Heart left ventricle (tissue), 16 donors: ENCODE measurements at regions of chr17 and their contacts with region 1.

Region 1: DNA sequence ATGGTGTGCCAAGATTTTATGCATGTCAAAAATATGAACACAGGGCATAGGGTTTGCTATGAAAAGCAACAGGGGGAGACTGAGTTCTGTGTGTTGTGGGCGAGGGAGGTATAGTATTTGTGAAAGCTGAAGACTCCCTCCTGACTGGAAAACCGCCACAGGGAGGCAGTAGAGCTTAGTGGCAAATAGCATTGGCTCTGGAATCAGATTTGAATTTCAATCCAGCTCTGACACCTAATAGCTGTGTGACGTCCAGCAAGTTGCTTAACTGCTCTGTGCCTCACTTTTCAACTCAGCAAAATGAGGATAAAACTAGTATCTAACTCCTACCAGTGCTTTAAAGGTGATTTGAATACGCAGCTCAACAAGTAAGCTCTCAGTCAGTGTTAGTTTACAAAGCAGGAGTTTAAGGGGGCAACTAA is 22.0 kb downstream of the KPNA2 start:
- DNase-seq: no peak
- ATAC-seq: no peak
- H3K4me3 ChIP-seq: no peak overlapping the region
- H3K27ac ChIP-seq: no peak overlapping the region
- H3K4me1 ChIP-seq: peaks cover 0 to 33% (median 15%) of the 10 kb centered on the region in 12 donors
- H3K27me3 ChIP-seq: no peaks in the 10 kb centered on the region
- CTCF ChIP-seq: peak; percentile 20 to 54 (median 43)
- POLR2A ChIP-seq: no peak

Region 2: GRCh38 chr17:68019675-68020408 is 37.7 kb before region 1 on chr17:
- intact Hi-C with region 1: no loop called
- DNase-seq: peak; percentile 95 to 98 (median 96)
- ATAC-seq: peak; percentile 96 to 99 (median 98)
- H3K4me3 ChIP-seq: peak overlapping the region; percentile 43 to 77 (median 65)
- H3K27ac ChIP-seq: peak overlapping the region; percentile 68 to 92 (median 90)
- H3K4me1 ChIP-seq: peaks cover 0 to 7% (median 5%) of the 10 kb centered on the region in 12 donors
- H3K27me3 ChIP-seq: no peaks in the 10 kb centered on the region
- CTCF ChIP-seq: peak; percentile 31 to 55 (median 44)
- POLR2A ChIP-seq: peak in 1 of 2 donors; percentile 69

Region 3: DNA sequence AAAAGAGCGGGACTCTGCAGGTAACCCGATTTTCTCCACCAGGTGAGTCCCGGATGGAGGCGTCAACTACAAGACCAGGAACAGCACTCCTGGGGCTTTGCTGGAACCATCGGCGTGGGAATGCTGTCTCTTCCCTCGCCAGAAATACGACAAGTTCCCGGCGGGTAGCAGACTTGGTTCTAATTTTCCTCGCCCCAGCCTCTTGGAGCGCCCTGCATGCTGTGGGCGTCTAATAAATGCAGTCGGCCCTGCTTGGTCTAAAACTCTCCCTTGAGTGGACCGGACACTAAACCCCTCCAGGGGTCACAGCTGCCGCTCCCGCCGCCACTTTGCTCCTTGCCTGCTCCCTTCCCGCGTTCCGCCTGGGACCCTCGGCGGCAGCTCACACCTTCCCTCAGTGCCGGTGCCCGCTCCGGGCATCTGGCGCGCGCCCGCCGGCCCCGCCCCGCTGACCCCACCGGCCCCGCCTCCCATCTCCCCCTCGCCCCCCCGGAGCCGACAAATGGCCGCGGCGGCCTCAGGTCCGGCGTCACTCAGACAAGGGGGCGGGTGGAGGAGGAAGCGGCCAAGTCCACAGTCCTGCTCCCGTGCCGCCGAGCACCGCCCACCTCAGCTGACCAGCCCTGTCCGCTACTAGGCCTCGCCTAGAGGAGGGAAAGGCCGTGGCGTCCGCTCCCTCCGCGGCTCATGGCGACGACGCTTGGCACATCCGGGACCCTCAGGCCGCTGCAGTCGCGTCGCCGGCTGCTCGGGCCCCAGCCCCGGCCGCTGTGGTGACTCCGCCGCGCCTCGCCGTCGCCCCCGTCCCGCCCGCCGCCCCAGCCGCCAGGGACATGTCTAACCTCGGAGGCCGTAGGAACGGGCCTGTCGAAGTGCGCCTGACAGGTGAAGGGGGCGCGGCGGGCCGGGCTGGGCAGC is 43.8 kb after region 1 on chr17:
- intact Hi-C with region 1: loop called in 1 of 10 experiments (anchors 10 kb)
- DNase-seq: peak; percentile 95 to 99 (median 96)
- ATAC-seq: peak; percentile 99 to 100 (median 100)
- H3K4me3 ChIP-seq: peak overlapping the region; percentile 69 to 99 (median 80)
- H3K27ac ChIP-seq: peak overlapping the region; percentile 73 to 98 (median 93)
- H3K4me1 ChIP-seq: peaks cover 0 to 23% (median 14%) of the 10 kb centered on the region in 12 donors
- H3K27me3 ChIP-seq: no peaks in the 10 kb centered on the region
- CTCF ChIP-seq: no peak
- POLR2A ChIP-seq: peak; percentile 36 to 83

Region 4: GRCh38 chr17:68133346-68134045 is 76.0 kb after region 1 on chr17:
- intact Hi-C with region 1: no loop called
- DNase-seq: peak in 3 of 5 donors; percentile 28 to 61 (median 40)
- ATAC-seq: peak; percentile 85 to 93 (median 90)
- H3K4me3 ChIP-seq: no peak overlapping the region
- H3K27ac ChIP-seq: peak overlapping the region in 7 of 12 donors; percentile 26 to 73 (median 40)
- H3K4me1 ChIP-seq: peaks cover 0 to 28% (median 3%) of the 10 kb centered on the region in 12 donors
- H3K27me3 ChIP-seq: no peaks in the 10 kb centered on the region
- CTCF ChIP-seq: peak in 2 of 12 donors; percentile 18 to 22
- POLR2A ChIP-seq: no peak

Region 5: DNA sequence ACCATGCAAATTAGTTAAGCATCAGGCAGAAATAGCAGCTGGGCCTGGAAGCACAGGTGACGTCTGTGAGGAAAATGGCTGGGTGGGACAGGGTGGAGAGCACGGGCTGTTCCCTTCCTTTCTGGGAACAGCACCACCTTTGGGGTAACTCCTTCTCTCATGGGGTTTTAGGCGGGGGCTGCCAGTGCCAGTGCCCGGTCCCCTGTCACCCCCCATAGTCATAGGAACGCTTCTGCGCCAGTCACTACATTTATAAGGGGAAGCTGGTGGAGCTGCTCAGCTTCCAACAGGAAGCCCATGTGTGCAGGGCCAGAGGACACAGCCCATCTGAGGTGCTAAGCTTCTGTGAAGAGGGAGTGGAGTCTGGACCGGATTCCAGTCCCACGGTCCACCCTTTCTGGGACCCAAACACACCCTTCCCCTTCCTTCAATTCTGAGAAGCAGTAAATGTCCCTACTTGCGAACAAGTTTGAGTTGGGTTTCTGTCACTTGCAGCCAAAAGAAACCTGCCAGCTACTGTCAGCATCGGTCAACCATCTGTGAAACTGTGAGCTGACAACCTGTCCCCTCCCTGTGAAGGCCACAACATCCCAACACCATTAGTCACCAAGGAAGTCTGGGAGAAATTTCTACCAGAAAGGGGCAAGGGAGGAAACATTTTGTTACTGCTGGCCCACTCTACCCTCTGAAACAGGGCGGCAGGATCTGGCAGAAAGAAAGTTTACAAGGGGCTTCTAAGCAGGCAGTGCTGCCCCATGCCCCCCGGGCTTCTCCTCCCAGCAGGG is 104.3 kb after region 1 on chr17:
- intact Hi-C with region 1: loop called in 3 of 10 experiments (anchors 2 to 10 kb)
- DNase-seq: peak in 4 of 5 donors; percentile 38 to 74 (median 58)
- ATAC-seq: peak; percentile 87 to 93 (median 90)
- H3K4me3 ChIP-seq: no peak overlapping the region
- H3K27ac ChIP-seq: peak overlapping the region; percentile 58 to 96 (median 84)
- H3K4me1 ChIP-seq: peaks cover 0 to 22% (median 2%) of the 10 kb centered on the region in 12 donors
- H3K27me3 ChIP-seq: no peaks in the 10 kb centered on the region
- CTCF ChIP-seq: no peak
- POLR2A ChIP-seq: no peak